Colonic mucosa (tissue), 4 donors: ENCODE measurements at regions of chr9 and their contacts with region 1.

Region 1: GRCh38 chr9:133103183-133103986 is 17.7 kb downstream of the RALGDS start:
- DNase-seq: peak; percentile 79
- H3K4me3 ChIP-seq: no peak overlapping the region
- H3K27ac ChIP-seq: no peak overlapping the region
- H3K4me1 ChIP-seq: no peaks in the 10 kb centered on the region
- H3K27me3 ChIP-seq: no peaks in the 10 kb centered on the region
- CTCF ChIP-seq: peak; percentile 99

Region 2: DNA sequence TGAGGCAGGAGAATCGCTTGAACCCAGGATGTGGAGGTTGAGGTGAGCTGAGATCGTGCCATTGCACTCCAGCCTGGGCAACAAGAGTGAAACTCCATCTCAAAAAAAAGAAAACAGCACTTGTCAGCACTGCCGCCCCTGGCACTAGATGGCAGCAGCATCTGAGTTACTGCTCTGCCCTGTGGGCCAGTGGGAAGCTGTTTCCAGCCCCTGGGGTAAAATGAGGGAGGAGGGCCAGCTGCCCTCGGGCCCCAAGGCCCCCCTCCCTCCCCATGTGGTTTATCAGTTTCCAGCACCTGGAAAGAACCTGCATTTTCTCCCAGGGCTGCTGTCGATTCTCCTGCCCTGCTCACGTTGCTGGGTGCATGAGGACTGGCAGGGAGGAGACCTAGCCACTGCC is 54.8 kb before region 1 on chr9:
- intact Hi-C with region 1: loop called (anchors 10 kb)
- DNase-seq: no peak
- H3K4me3 ChIP-seq: no peak overlapping the region
- H3K27ac ChIP-seq: no peak overlapping the region
- H3K4me1 ChIP-seq: peaks cover 3% of the 10 kb centered on the region
- H3K27me3 ChIP-seq: no peaks in the 10 kb centered on the region
- CTCF ChIP-seq: no peak

Region 3: GRCh38 chr9:133144137-133144903 is 40.9 kb after region 1 on chr9:
- intact Hi-C with region 1: loop called (anchors 1 kb)
- DNase-seq: peak; percentile 91
- H3K4me3 ChIP-seq: peak overlapping the region; percentile 29
- H3K27ac ChIP-seq: peak overlapping the region; percentile 52
- H3K4me1 ChIP-seq: peaks cover 24% of the 10 kb centered on the region
- H3K27me3 ChIP-seq: no peaks in the 10 kb centered on the region
- CTCF ChIP-seq: peak; percentile 96